ENCODE measurements at regions of chr15 and their contacts with region 1.

Region 1: GRCh38 chr15:67065444-67066093 is at the start of gene SMAD3:
- DNase-seq: peak; percentile 95
- H3K4me3 Mint-ChIP-seq: peak within 1 kb of the TSS; percentile 92
- H3K27ac Mint-ChIP-seq: peak within 1 kb of the TSS; percentile 99
- H3K4me1 Mint-ChIP-seq: peaks cover 56% of the 10 kb centered on the region
- H3K27me3 Mint-ChIP-seq: peaks cover 17% of the 10 kb centered on the region
- total RNA-seq, gene SMAD3: 59.9 and 61.6 TPM in 2 replicates

Region 2: DNA sequence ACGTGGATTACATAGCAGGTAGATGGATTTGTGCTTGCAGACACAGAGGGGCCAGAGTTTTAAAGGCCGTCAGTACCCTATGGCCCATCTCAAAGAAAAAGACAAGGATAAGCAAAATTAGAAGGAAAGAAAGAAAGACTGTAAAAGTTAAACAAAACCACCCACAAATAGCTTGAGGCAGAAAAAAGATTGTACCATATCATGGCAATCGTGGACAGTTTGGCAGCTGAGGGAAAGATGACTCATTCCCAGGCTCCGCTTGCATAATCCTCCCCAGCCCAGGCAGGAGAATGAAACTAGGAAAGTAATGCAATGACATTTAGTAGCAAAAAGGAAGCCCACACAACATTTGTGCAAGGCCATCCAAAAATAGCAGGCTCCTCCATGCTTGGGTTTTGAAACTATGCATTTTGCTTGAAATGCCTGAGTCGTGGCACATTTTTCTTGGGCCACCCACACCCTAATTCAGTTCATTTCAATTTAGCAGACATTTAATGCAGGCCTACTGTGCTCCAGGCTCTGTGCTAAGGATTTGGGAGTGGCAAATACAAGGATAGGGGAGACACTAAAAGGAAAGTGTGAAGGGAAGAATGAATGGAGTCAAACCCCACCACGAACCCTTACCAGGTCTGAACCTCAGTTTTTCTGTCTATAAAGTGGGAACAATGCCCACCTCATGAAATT is 41.1 kb before region 1 on chr15:
- intact Hi-C with region 1: loop called (anchors 5 kb)
- DNase-seq: no peak
- H3K4me3 Mint-ChIP-seq: peak overlapping the region; percentile 49
- H3K27ac Mint-ChIP-seq: peak overlapping the region; percentile 64
- H3K4me1 Mint-ChIP-seq: peaks cover 28% of the 10 kb centered on the region
- H3K27me3 Mint-ChIP-seq: no peaks in the 10 kb centered on the region

Region 3: DNA sequence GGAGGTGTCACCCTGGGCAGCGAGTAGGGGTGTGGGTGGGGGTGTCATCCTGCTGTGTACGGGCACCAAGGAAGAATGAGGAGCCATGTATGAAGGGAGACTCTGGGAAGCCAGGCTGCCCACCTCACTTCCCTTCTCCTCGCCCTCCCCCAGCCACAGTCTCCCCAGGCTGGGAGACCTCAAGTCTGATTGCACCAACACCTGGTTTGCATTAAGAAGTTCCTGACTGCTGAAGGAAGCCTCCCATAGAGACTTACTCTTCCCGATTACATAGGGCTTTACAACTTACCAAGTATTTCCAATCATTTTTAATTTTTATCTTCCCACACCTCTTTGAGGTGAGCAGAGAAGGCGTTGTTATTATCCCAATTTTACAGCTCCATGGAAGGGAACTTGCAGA is 29.7 kb before region 1 on chr15:
- intact Hi-C with region 1: no loop called
- DNase-seq: no peak
- H3K4me3 Mint-ChIP-seq: no peak overlapping the region
- H3K27ac Mint-ChIP-seq: no peak overlapping the region
- H3K4me1 Mint-ChIP-seq: peaks cover 38% of the 10 kb centered on the region
- H3K27me3 Mint-ChIP-seq: peaks cover 10% of the 10 kb centered on the region

Region 4: GRCh38 chr15:67080900-67081431 is 15.4 kb after region 1 on chr15:
- intact Hi-C with region 1: loop called (anchors 1 kb)
- DNase-seq: peak; percentile 83
- H3K4me3 Mint-ChIP-seq: peak overlapping the region; percentile 63
- H3K27ac Mint-ChIP-seq: peak overlapping the region; percentile 96
- H3K4me1 Mint-ChIP-seq: peaks cover 94% of the 10 kb centered on the region
- H3K27me3 Mint-ChIP-seq: no peaks in the 10 kb centered on the region

Region 5: DNA sequence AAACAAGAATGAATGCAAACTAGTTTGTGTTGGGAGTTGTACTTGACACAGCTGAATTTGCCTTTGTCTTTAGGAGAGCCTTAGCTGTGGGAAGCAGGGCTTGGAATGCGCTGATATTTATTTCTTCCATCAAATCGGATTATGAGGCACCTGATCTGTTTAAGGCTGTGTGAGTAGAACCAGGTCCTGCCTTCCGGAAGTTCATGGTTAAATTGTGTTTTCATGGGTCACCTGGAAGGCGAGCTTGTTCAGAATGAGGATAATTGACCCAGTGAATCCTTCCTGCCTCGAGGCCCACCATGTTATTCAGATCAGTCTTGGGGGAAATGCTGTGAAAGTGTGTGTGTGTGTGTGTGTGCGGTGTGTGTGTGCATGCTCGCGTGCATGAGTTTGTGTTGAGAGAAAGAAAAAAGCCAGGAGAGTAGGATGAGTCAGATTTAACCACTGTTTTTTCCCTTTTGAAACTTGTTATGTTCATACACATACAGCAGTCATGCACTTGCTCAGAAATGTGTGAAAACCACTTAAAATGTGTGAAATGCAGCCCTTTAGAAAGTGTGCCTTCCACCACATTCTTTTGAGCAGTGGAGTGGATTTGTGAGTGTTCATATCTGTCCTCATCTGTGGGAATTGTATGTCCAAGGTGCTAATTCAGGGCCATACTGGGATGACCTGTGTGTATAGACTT is 36.5 kb after region 1 on chr15:
- intact Hi-C with region 1: loop called (anchors 1 kb)
- DNase-seq: peak; percentile 89
- H3K4me3 Mint-ChIP-seq: no peak overlapping the region
- H3K27ac Mint-ChIP-seq: no peak overlapping the region
- H3K4me1 Mint-ChIP-seq: peaks cover 62% of the 10 kb centered on the region
- H3K27me3 Mint-ChIP-seq: no peaks in the 10 kb centered on the region

Region 6: DNA sequence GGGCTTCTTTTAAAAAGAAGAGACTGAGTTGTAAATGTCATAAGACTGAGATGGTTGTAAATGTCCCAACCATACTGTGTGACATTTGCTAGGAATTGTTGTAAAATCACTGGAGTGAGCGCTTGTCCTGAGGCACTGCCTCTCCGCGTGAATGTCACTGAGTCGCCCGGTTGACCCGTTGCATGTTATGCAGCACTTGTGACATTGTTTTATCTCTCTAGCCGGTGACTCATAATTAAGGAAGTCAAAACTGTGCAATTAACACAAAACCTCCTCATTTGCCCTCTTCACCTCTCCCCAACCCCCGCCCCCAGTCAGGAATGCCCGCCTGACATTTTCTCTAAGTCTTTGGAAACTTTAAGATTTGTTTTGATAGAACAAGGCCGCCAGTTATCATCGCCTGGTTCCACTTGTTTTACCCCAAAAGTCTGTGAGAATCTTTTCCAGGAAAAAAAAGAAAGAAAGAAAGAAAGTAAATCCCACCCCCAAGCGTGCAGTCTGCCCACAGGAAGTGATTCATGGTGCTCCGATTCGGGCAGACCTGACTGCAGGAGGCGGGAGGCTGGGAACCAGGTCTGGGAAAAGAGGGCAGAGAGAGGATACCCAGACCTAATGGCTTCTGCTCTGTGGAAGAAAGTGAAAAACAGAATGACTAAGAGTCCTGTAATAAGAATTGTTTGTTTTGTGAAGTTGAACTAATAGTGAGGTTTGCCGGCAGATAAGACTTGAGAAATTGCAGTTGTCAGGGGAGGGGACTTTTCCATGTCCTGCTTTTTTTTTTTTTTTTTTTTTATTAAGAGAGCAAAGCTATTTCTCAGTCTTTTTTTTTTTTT is 84.7 kb after region 1 on chr15:
- intact Hi-C with region 1: loop called (anchors 5 kb)
- DNase-seq: peak; percentile 80
- H3K4me3 Mint-ChIP-seq: peak overlapping the region; percentile 73
- H3K27ac Mint-ChIP-seq: peak overlapping the region; percentile 86
- H3K4me1 Mint-ChIP-seq: peaks cover 67% of the 10 kb centered on the region
- H3K27me3 Mint-ChIP-seq: no peaks in the 10 kb centered on the region

Region 7: GRCh38 chr15:67161881-67162280 is 96.3 kb after region 1 on chr15:
- intact Hi-C with region 1: no loop called
- DNase-seq: no peak
- H3K4me3 Mint-ChIP-seq: no peak overlapping the region
- H3K27ac Mint-ChIP-seq: peak overlapping the region; percentile 49
- H3K4me1 Mint-ChIP-seq: peaks cover 32% of the 10 kb centered on the region
- H3K27me3 Mint-ChIP-seq: no peaks in the 10 kb centered on the region

Region 8: GRCh38 chr15:67254238-67255175 is 188.9 kb after region 1 on chr15 and contains the starts of genes AAGAB and IQCH:
- intact Hi-C with region 1: loop called (anchors 5 kb)
- DNase-seq: peak; percentile 100
- H3K4me3 Mint-ChIP-seq: peak within 1 kb of the TSS; percentile 99
- H3K27ac Mint-ChIP-seq: peak within 1 kb of the TSS; percentile 98
- H3K4me1 Mint-ChIP-seq: peaks cover 28% of the 10 kb centered on the region
- H3K27me3 Mint-ChIP-seq: peaks cover 15% of the 10 kb centered on the region
- total RNA-seq, gene AAGAB: 44.9 and 48.6 TPM in 2 replicates
- total RNA-seq, gene IQCH: 0.70 and 1.6 TPM in 2 replicates

Measured in activated CD4-positive, alpha-beta T cell treated with anti-CD3 and anti-CD28 coated beads, Interleukin-2, amount 10 ng/mL, durations not matched to agents 24 days and 14 days (primary cell).